Naive thymus-derived CD8-positive, alpha-beta T cell (primary cell): ENCODE measurements at regions of chr17 and their contacts with region 1.

Region 1: GRCh38 chr17:59155439-59156182 is at the start of gene PRR11:
- DNase-seq: peak in 7 of 10 donors; percentile 74 to 98 (median 95)
- ATAC-seq: peak; percentile 88 to 89
- H3K4me3 Mint-ChIP-seq: no peak within 1 kb of the TSS
- H3K27ac Mint-ChIP-seq: no peak within 1 kb of the TSS
- H3K4me1 Mint-ChIP-seq: peaks cover 2 to 42% (median 16%) of the 10 kb centered on the region in 4 donors
- H3K27me3 Mint-ChIP-seq: no peaks in the 10 kb centered on the region
- polyA plus RNA-seq, gene PRR11: 0.32 to 0.66 TPM in 2 of 3 donors, not detected in the other

Region 2: DNA sequence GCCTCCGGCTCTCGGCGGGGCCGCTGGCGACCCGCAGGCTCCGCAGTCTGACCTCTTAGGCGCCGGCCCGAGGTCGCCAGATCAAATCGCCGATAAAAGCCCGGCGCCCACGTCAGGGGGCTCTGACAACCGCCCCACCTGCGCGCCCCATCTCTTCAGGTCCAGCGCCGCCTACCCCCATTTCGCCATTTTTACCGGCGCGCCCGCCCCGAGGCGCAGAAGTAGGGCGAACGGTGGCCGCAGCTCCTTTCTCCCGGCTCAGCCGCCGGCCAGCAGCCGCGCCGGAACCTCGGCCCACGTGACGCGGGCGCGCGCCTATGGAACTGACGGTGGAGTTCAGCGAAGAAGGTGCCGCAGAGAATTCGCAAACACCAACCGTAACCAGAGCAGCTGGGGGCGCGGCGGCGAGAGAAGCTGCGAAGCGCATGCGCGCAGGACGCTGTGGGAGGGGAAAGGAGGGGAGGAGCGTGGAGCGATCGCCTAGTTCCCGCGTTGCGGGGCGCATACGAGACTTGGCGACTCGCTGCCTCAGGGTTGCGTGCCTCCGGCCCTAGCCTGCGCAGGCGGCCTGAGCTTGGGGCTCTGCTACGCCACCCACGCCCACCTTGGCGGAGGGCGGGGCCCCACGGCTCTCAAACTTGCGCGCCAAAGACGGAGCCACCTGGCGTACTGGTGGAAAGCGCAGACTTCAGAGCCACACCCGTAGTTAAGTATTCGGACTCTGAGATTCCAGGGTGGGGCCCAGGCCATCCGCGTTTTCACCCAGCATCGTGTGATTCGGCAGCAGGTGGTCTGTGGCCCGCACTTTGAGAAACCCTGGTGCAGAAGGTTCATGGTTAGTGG is 48.9 kb before region 1 on chr17 and contains the start of gene TRIM37:
- POLR2A ChIA-PET with region 1: interaction called, 18 read pairs
- DNase-seq: peak; percentile 97 to 99 (median 98)
- ATAC-seq: peak; percentile 93 to 95
- H3K4me3 Mint-ChIP-seq: peak within 1 kb of the TSS; percentile 91 to 98 (median 94)
- H3K27ac Mint-ChIP-seq: peak within 1 kb of the TSS; percentile 79 to 96 (median 92)
- H3K4me1 Mint-ChIP-seq: peaks cover 7 to 41% (median 38%) of the 10 kb centered on the region in 4 donors
- H3K27me3 Mint-ChIP-seq: no peaks in the 10 kb centered on the region
- polyA plus RNA-seq, gene TRIM37: 7.2 to 9.3 (median 8.3) TPM